ENCODE measurements at regions of chr22 and their contacts with region 1.

Region 1: DNA sequence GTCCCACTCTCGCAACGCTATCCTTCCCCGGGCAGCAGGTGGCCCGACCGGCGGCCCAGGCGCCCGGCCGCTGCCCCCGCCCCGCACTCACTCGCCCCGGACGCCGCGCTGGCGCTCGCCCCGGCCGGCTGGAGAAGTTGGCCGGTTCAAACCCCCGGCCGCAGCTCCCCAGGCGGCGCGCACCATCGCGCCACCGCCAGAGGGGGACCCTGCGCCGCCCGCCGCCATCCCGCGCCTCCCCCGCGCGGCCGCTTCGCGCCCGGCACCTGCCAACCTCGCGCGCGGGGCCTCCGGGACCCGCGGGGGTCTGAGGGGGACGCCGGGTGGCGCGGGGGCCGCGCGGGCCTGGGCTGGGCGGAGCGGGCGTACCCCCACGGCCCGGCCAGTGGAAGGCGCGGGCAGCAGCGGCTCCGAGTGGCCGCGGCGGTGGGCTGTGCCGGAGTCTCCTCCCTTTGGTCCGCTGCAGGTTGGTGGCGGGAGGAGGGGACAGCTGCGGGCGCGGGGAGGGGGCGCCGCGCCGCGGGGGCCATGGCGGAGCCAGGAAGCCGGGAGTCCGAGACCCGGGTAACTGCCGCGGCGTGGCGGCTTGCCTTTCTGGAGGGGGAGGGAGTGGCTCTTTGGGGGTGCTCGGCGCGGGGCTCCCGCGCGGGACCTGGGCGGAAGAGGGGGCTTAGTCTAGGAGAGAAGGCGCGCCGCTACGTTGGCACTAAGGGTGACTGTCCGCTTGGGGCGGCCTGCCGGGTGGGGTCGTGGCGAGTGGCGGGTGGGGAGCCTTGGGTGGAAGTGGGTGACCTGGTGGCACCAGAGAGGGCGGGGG is at the starts of genes MPST and TST:
- DNase-seq: peak; percentile 48 to 87 (median 77)
- H3K4me3 ChIP-seq: peak within 1 kb of the TSS; percentile 64 to 98 (median 88)
- H3K27ac ChIP-seq: peak within 1 kb of the TSS; percentile 66 to 98 (median 93)
- H3K27me3 ChIP-seq: no peaks in the 10 kb centered on the region
- CTCF ChIP-seq: peak in 12 of 56 donors; percentile 5 to 30 (median 14)
- total RNA-seq, gene MPST: 12.8 to 46.5 (median 22.4) TPM
- total RNA-seq, gene TST: 8.8 to 40.3 (median 19.7) TPM

Region 2: DNA sequence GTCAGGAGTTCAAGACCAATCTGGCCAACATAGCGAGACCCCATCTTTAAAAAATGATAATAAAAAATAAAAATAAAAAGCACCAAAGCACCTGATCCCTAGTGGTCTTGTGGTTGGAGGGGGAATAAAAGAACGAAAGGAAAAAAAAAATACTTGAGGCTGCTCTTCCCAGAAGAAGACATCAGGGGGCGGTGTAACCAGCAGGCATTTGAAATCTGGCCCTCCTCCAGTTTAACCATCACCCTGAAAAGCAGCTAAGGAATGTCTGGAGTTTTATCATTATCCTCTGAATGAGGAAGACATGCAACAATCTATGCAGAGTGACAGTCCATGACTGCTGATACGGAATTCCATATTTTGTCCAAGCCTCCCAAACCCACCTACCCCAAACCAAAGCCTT is 26.4 kb after region 1 on chr22:
- intact Hi-C with region 1: loop called (anchors 1 to 5 kb)
- DNase-seq: no peak
- H3K4me3 ChIP-seq: no peak overlapping the region
- H3K27ac ChIP-seq: no peak overlapping the region
- H3K27me3 ChIP-seq: no peaks in the 10 kb centered on the region
- CTCF ChIP-seq: peak in 54 of 56 donors; percentile 26 to 65 (median 42)

Region 3: DNA sequence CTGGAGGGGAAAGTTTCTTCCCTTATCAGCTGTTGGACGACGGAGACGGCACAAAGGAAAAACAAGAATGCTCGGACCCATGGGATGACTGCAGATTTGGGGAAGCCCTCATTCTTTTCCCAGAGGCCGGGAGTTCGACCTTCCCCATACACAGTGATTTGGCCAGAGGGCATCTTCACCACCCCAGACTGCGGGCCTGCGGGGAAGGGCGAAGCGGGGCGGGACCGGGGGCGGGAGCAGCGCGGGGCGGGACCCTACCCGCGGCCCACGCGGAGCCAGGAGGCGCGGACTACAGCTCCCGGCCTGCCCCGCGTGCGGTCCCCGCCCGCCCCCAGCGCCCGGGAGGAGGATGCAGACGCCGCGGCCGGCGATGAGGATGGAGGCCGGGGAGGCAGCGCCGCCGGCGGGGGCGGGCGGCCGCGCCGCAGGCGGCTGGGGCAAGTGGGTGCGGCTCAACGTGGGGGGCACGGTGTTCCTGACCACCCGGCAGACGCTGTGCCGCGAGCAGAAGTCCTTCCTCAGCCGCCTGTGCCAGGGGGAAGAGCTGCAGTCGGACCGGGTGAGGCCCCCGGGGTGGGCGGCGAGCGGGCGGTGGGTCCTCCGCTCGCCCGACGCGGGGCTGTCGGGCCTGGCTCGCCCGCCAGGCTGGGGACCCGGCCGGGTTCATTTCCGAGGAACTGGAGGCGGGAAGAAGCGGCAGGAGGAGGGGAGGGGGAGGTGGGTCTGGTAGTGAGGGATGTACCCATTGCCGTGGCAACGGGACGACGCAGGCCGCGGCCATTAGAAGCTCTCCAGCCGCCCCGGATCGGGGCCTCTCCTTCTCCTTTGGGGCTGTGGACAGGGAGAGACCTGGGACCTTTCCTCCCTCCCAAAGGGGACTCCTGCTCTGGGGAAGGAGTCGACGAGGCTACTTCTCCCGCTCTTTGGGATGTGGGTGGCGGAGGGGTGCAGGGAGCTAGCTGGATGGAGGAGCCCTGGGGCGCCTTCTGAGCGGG is 32.2 kb after region 1 on chr22 and contains the start of gene KCTD17:
- intact Hi-C with region 1: loop called (anchors 1 to 5 kb)
- DNase-seq: peak; percentile 45 to 88 (median 72)
- H3K4me3 ChIP-seq: peak within 1 kb of the TSS; percentile 64 to 97 (median 82)
- H3K27ac ChIP-seq: peak within 1 kb of the TSS in 44 of 59 donors; percentile 0 to 85 (median 64)
- H3K27me3 ChIP-seq: no peaks in the 10 kb centered on the region
- CTCF ChIP-seq: peak in 21 of 56 donors; percentile 7 to 47 (median 28)
- total RNA-seq, gene KCTD17: 61.1 to 128 (median 98.0) TPM